PC-3 (cell line): ENCODE measurements at regions of chr14 and their contacts with region 1.

Region 1: GRCh38 chr14:74223016-74223415 is 16.2 kb upstream of the VSX2 start:
- DNase-seq: no peak
- ATAC-seq: no peak
- H3K4me3 ChIP-seq: no peak overlapping the region
- H3K27ac ChIP-seq: no peak overlapping the region
- H3K4me1 ChIP-seq: peaks cover under 1% of the 10 kb centered on the region; the same call in 1 of the 2 replicates
- H3K27me3 ChIP-seq: peaks cover 8% of the 10 kb centered on the region; the same call in 1 of the 2 replicates
- CTCF ChIP-seq: no peak

Region 2: GRCh38 chr14:74194506-74195274 is 28.3 kb before region 1 on chr14:
- CTCF ChIA-PET with region 1: no interaction called
- POLR2A ChIA-PET with region 1: interaction called, 35 read pairs
- intact Hi-C with region 1: no loop called
- DNase-seq: no peak
- ATAC-seq: no peak
- H3K4me3 ChIP-seq: no peak overlapping the region
- H3K27ac ChIP-seq: no peak overlapping the region
- H3K4me1 ChIP-seq: no peaks in the 10 kb centered on the region
- H3K27me3 ChIP-seq: no peaks in the 10 kb centered on the region
- CTCF ChIP-seq: no peak

Region 3: GRCh38 chr14:74290415-74290814 is 67.4 kb after region 1 on chr14:
- CTCF ChIA-PET with region 1: no interaction called
- POLR2A ChIA-PET with region 1: no interaction called
- intact Hi-C with region 1: no loop called
- DNase-seq: peak; percentile 51
- ATAC-seq: peak; percentile 33
- H3K4me3 ChIP-seq: no peak overlapping the region
- H3K27ac ChIP-seq: no peak overlapping the region
- H3K4me1 ChIP-seq: no peaks in the 10 kb centered on the region
- H3K27me3 ChIP-seq: no peaks in the 10 kb centered on the region
- CTCF ChIP-seq: peak; percentile 61